ENCODE measurements at regions of chr19 and their contacts with region 1.

Region 1: DNA sequence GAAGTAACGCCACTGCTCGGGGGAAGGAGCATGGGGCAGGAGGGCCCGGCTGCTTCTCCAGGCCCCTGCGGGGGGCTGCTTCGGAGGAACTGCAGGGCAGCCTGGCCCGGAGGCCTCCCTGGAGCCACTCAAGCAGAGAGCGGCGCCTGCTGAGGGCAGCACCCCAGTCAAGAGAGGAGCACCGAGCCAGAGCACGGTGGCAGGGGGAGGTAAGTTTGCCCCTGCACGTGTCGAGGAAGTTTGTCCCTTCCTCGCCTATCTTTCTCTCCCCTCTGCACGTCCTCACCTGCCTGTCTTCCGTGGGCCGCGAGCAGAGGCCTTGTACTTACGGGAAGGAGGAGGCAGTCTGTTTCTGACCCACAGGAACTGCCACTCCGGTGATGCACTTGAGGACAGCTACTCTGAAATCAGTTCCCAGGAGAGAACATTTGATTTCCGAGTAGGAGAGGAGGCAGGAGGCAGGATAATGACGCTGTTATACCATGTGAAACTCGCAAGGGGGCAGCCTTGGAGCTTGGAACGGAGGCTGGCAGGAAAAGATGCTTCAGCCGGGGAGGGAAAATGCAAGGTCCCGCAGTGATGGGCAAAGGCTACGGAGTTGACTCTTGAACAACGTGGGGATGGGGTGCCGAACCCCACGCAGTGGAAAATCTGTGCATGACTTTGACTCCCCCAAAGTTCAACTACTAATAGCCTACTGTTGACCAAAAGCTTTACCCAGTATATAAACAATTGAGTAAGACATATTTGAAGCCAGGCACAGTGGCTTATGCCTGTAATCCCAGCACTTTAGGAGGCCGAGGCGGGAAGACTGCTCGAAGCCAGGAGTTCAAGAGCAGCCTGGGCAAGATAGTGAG is 5.0 kb downstream of the FFAR1 start:
- DNase-seq: peak; percentile 77
- ATAC-seq: peak; percentile 71
- H3K4me3 Mint-ChIP-seq: no peak overlapping the region
- H3K27ac Mint-ChIP-seq: no peak overlapping the region
- H3K4me1 Mint-ChIP-seq: peaks cover 24% of the 10 kb centered on the region
- H3K27me3 Mint-ChIP-seq: peaks cover 35% of the 10 kb centered on the region

Region 2: GRCh38 chr19:35451338-35452096 is 98.8 kb after region 1 on chr19:
- CTCF ChIA-PET with region 1: interaction called, 20 read pairs
- DNase-seq: peak; percentile 61
- ATAC-seq: peak; percentile 90
- H3K4me3 Mint-ChIP-seq: peak overlapping the region; percentile 17
- H3K27ac Mint-ChIP-seq: peak overlapping the region; percentile 60
- H3K4me1 Mint-ChIP-seq: peaks cover 52% of the 10 kb centered on the region
- H3K27me3 Mint-ChIP-seq: peaks cover 35% of the 10 kb centered on the region

Region 3: DNA sequence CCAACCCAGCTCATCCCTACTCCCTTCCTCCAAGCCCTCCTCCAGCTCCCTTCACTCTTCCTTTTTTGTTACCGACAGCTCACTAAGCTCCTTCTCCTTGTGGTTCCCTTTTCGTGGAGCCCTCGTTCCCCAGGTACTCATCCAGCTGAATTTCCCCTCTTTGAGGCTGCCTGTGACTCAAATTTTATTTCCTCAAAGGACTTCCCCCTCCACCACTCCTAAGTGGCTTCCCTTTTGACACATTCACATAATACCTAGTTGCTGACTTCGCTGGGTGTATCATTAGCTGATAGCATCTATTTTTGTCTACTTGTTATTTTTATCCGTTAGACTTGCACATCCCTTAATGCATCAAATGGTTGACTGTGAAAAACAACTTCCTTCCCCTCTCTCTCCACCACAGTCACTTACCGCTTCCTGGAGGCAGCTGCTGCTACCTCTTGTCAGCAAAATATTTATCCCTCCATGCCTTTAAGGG is 109.8 kb after region 1 on chr19:
- CTCF ChIA-PET with region 1: interaction called, 76 read pairs
- DNase-seq: peak; percentile 86
- ATAC-seq: peak; percentile 95
- H3K4me3 Mint-ChIP-seq: peak overlapping the region; percentile 55
- H3K27ac Mint-ChIP-seq: peak overlapping the region; percentile 91
- H3K4me1 Mint-ChIP-seq: peaks cover 35% of the 10 kb centered on the region
- H3K27me3 Mint-ChIP-seq: peaks cover 3% of the 10 kb centered on the region

Region 4: DNA sequence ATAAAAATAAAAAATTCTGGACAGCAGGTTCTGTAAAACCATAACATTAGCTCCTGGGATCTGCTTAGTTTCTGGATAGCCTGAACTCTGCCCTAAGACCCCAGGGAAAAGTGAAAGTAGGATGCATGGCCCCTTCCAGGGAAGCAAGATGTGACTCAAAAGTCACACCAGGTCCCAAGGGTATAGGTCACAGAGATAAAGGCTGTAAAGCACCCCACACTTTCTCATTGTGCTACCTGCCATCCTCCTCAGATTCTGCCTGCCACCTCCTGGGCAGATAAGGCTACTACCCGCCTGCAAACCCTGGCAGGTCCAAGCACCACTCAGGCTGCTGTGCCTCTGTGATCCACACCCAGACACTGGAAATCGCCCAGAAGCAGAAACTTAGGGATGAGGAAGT is 116.0 kb after region 1 on chr19:
- CTCF ChIA-PET with region 1: interaction called, 76 read pairs
- DNase-seq: peak; percentile 81
- ATAC-seq: peak; percentile 99
- H3K4me3 Mint-ChIP-seq: no peak overlapping the region
- H3K27ac Mint-ChIP-seq: no peak overlapping the region
- H3K4me1 Mint-ChIP-seq: peaks cover 7% of the 10 kb centered on the region
- H3K27me3 Mint-ChIP-seq: peaks cover 3% of the 10 kb centered on the region

Region 5: GRCh38 chr19:35474104-35474503 is 121.4 kb after region 1 on chr19:
- CTCF ChIA-PET with region 1: interaction called, 76 read pairs
- DNase-seq: no peak
- ATAC-seq: no peak
- H3K4me3 Mint-ChIP-seq: no peak overlapping the region
- H3K27ac Mint-ChIP-seq: no peak overlapping the region
- H3K4me1 Mint-ChIP-seq: no peaks in the 10 kb centered on the region
- H3K27me3 Mint-ChIP-seq: no peaks in the 10 kb centered on the region

Region 6: DNA sequence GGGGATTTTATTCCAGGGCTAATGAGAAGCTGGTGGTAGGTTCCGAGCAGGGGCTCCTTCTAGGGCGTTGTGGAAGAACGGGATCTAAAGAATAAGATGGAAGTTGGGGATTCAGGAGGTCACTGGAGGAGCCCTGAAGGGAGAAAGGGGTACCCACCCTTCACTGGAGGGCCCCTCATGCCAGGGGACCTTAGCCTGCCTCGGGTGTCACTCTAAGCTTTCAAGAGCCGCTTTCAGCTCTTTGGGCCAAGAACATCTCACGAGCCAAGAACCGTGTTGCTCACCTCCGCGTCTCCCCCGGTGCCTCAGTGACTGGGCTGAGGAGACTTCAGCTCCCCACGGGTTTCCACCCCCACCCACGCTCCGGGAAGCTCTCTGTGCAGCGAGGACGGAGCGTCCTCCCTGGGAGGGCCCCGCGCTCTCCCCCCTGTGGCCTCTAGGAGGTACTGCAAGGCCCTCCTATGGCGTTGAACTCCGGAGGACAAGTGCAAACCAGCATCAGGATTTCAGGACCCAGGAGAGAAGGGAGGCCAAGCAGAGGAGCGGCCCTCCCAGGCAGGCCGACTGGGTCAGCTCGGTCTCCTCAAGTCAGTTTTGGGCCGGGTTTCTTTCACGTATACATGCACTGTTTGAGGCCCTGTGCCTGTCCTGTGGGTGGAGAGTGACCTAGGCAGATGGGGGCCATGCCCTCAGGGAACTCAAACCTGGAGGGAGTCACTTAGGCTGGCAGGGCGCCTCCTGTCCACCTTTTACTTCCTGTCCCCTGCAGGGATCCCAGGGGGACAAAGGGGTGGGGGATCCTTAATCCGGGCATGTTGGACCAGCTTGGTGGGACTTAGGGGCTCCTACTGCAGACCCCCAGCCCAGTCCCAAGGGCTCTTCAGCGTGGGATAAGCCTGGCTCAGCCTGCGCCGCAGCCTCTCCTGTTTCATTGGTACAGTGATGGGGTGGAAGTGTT is 142.7 kb after region 1 on chr19:
- CTCF ChIA-PET with region 1: interaction called, 51 read pairs
- DNase-seq: peak; percentile 72
- ATAC-seq: peak; percentile 91
- H3K4me3 Mint-ChIP-seq: no peak overlapping the region
- H3K27ac Mint-ChIP-seq: no peak overlapping the region
- H3K4me1 Mint-ChIP-seq: peaks cover 3% of the 10 kb centered on the region
- H3K27me3 Mint-ChIP-seq: peaks cover 19% of the 10 kb centered on the region

Region 7: DNA sequence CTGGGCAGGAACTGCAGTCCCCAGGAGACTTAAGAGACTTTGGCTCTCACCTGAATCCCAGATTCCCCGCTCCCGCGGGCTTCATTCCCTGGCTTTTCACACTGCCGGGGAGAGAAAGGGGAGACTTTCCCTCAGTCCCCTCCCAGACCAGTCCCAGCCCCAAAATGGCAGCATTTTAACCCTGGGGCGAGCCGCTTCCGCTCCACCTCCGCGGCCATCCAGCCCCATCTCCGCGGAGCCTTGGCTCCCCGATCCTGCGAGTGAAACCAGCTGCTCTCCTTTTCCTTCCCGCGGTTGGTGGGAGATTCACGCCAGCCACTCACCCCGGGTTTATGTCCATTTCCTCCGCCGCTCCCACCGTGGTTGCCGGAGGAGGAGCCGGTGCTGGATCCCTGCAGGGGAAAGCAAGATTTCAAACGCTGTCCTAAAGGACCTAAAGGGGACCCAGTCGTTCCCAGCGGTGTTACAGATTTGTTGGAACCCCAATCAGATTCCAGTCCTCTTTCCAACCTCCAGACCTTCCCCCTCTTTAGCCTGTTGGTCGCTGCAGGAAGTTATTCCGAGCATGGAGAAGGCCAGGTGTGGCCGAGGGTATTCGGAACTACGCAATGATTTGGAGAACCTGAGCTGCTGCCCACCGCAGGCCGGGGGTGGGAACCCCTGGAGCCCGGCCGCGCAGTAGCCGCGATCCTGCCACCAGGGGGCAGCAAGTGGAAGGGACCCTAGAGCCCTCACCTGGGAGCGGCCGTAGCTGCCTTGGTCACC is 157.4 kb after region 1 on chr19:
- CTCF ChIA-PET with region 1: interaction called, 10 read pairs
- DNase-seq: peak; percentile 75
- ATAC-seq: peak; percentile 78
- H3K4me3 Mint-ChIP-seq: peak overlapping the region; percentile 22
- H3K27ac Mint-ChIP-seq: no peak overlapping the region
- H3K4me1 Mint-ChIP-seq: peaks cover 14% of the 10 kb centered on the region
- H3K27me3 Mint-ChIP-seq: peaks cover 59% of the 10 kb centered on the region

Measured in activated CD8-positive, alpha-beta memory T cell treated with anti-CD3 and anti-CD28 coated beads, Interleukin-2, amount 10 ng/mL, durations not matched to agents 7 days and 5 days (primary cell).